Activated naive CD8-positive, alpha-beta T cell treated with anti-CD3 and anti-CD28 coated beads, Interleukin-2, amount 10 ng/mL, durations not matched to agents 7 days and 5 days (primary cell): ENCODE measurements at regions of chr7 and their contacts with region 1.

Region 1: GRCh38 chr7:123748734-123749536 is at the start of gene WASL:
- DNase-seq: peak; percentile 94
- ATAC-seq: peak; percentile 80
- H3K4me3 Mint-ChIP-seq: peak within 1 kb of the TSS; percentile 93
- H3K27ac Mint-ChIP-seq: peak within 1 kb of the TSS; percentile 92
- H3K4me1 Mint-ChIP-seq: peaks cover 35% of the 10 kb centered on the region
- H3K27me3 Mint-ChIP-seq: peaks cover 6% of the 10 kb centered on the region
- total RNA-seq, gene WASL: 11.8 to 12.0 TPM

Region 2: GRCh38 chr7:123674399-123675180 is 74.3 kb before region 1 on chr7:
- POLR2A ChIA-PET with region 1: no interaction called
- DNase-seq: no peak
- ATAC-seq: no peak
- H3K4me3 Mint-ChIP-seq: no peak overlapping the region
- H3K27ac Mint-ChIP-seq: no peak overlapping the region
- H3K4me1 Mint-ChIP-seq: no peaks in the 10 kb centered on the region
- H3K27me3 Mint-ChIP-seq: no peaks in the 10 kb centered on the region

Region 3: DNA sequence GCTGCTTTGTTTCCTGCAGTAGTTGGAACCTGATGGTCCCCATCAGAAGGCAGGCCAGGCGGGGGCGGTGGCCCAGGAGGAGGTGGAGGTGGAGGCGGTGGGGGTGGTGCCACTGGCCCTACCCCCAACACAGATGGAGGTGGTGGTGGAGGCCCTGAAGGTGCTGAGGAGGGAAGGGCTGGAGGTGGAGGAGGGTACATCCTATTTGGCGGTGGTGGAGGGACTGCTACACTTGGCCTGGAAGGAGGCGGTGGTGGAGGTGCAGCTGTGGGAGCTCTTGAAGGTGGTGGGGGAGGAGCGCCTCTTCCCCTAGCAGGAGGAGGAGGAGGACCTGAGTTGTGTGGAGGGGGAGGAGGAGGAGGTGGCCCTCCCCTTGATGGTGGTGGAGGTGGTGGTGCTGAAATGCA is 56.5 kb before region 1 on chr7:
- POLR2A ChIA-PET with region 1: no interaction called
- DNase-seq: no peak
- ATAC-seq: no peak
- H3K4me3 Mint-ChIP-seq: no peak overlapping the region
- H3K27ac Mint-ChIP-seq: no peak overlapping the region
- H3K4me1 Mint-ChIP-seq: peaks cover 1% of the 10 kb centered on the region
- H3K27me3 Mint-ChIP-seq: no peaks in the 10 kb centered on the region

Region 4: GRCh38 chr7:123709525-123709924 is 39.4 kb before region 1 on chr7:
- POLR2A ChIA-PET with region 1: interaction called, 11 read pairs
- DNase-seq: no peak
- ATAC-seq: no peak
- H3K4me3 Mint-ChIP-seq: no peak overlapping the region
- H3K27ac Mint-ChIP-seq: no peak overlapping the region
- H3K4me1 Mint-ChIP-seq: peaks cover 50% of the 10 kb centered on the region
- H3K27me3 Mint-ChIP-seq: no peaks in the 10 kb centered on the region

Region 5: DNA sequence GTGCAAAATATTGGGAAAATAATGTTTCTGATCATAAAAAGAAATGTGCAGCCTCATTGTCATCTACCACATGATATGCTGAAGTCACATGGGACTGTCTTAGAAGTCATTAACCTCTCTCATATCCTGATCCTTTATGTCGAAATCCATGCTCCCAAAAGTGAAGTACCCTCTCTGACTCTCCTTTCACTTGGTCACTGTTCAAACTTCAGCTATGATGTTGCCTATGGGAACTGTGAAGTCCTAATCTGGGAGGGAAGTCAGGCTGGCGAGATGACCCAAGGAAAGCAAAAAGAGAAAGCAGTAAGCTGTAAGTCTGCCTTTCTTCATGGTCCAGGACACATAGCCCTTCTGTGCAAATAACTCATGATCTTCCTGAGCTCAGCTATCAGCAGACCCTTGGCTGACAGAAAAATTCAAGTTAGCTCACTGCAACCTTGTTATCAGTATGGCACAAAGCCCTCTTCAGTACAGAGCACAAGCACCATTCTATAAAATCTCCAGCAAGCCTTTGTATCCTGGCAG is 29.7 kb before region 1 on chr7:
- POLR2A ChIA-PET with region 1: interaction called, 20 read pairs
- DNase-seq: no peak
- ATAC-seq: peak; percentile 51
- H3K4me3 Mint-ChIP-seq: peak overlapping the region; percentile 72
- H3K27ac Mint-ChIP-seq: peak overlapping the region; percentile 83
- H3K4me1 Mint-ChIP-seq: peaks cover 44% of the 10 kb centered on the region
- H3K27me3 Mint-ChIP-seq: no peaks in the 10 kb centered on the region

Region 6: GRCh38 chr7:123724817-123725253 is 24.1 kb before region 1 on chr7:
- POLR2A ChIA-PET with region 1: interaction called, 18 read pairs
- DNase-seq: no peak
- ATAC-seq: peak; percentile 59
- H3K4me3 Mint-ChIP-seq: peak overlapping the region; percentile 70
- H3K27ac Mint-ChIP-seq: peak overlapping the region; percentile 78
- H3K4me1 Mint-ChIP-seq: peaks cover 43% of the 10 kb centered on the region
- H3K27me3 Mint-ChIP-seq: no peaks in the 10 kb centered on the region